ENCODE measurements at regions of chr1 and their contacts with region 1.

Region 1: DNA sequence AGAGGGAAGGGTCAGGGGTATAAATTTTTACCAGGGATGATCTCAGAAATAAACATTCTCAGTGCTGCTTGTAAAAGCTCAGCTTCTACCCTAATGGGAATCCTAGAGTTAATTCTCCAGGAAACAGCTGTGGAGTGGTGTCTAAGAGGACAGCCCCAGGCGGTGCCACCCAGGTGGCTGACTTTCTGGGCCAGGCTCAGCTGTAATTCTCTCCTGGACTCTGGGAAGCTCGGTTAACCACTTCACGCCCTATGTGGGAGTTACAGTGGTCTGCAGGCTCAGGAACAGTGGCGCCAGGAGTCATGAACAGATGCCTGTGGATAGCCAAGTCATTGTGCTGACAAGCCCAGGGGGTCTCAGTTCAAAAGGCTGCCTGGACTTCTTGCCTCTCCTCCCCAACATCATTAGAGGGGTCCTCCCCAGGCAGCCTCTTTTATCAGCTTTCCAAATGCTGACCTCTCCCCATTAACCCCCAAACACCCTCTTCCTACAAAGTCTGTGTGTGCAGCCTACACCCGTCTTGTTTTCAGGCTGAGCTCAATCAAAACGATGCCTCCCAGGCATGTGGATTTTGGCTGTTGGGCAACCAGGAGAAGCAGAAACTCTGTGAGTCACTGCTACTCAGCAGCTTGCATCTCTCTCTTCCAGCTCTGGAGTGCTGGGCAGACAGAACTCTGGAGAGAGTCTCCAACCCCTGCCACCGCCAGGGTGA is 1.2 kb downstream of the HHIPL2 start:
- DNase-seq: peak in 1 of 3 donors; percentile 11
- H3K4me3 ChIP-seq: no peak overlapping the region
- H3K27ac ChIP-seq: no peak overlapping the region
- H3K4me1 ChIP-seq: peaks cover 0 to 7% (median 0%) of the 10 kb centered on the region in 4 experiments
- H3K27me3 ChIP-seq: peaks cover 0 to 33% (median 7%) of the 10 kb centered on the region in 5 experiments

Region 2: GRCh38 chr1:222136869-222137268 is 409.8 kb before region 1 on chr1:
- CTCF ChIA-PET with region 1: no interaction called
- POLR2A ChIA-PET with region 1: interaction called, 10 read pairs
- DNase-seq: no peak
- H3K4me3 ChIP-seq: no peak overlapping the region
- H3K27ac ChIP-seq: no peak overlapping the region
- H3K4me1 ChIP-seq: no peaks in the 10 kb centered on the region
- H3K27me3 ChIP-seq: no peaks in the 10 kb centered on the region

Measured in common myeloid progenitor, CD34-positive (primary cell).